CD8-positive, alpha-beta T cell (primary cell): ENCODE measurements at regions of chr10 and their contacts with region 1.

Region 1: GRCh38 chr10:89563861-89564478 is 28.6 kb upstream of the SLC16A12 start:
- DNase-seq: peak in 3 of 9 experiments; percentile 13 to 71 (median 60)
- ATAC-seq: peak; percentile 59
- H3K4me3 ChIP-seq: no peak overlapping the region
- H3K4me3 Mint-ChIP-seq: no peak overlapping the region
- H3K27ac ChIP-seq: no peak overlapping the region
- H3K27ac Mint-ChIP-seq: no peak overlapping the region
- H3K4me1 ChIP-seq: no peaks in the 10 kb centered on the region
- H3K4me1 Mint-ChIP-seq: no peaks in the 10 kb centered on the region
- H3K27me3 ChIP-seq: no peaks in the 10 kb centered on the region
- H3K27me3 Mint-ChIP-seq: peaks cover 6% of the 10 kb centered on the region
- CTCF ChIP-seq: peak; percentile 81

Region 2: DNA sequence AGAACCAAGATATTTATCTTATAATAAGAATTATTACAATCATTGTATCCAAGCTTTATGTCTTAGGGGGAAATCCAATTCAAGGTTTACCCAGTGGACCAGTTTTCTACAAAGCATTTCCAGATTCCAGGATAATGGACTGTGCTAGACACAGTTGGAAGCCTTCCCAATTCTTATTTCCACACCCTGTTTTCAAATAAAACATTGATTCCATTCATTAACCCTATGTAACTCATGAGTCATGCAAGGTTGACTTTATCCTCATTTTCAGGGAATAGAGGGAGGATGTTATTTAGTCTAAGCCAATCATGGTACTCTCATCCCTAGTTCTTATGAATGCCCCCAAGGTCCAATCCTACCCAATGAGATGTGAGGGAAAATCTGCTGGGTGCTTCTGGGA is 1126.6 kb before region 1 on chr10:
- CTCF ChIA-PET with region 1: no interaction called
- POLR2A ChIA-PET with region 1: no interaction called
- intact Hi-C with region 1: no loop called
- DNase-seq: no peak
- ATAC-seq: no peak
- H3K4me3 ChIP-seq: no peak overlapping the region
- H3K4me3 Mint-ChIP-seq: no peak overlapping the region
- H3K27ac ChIP-seq: no peak overlapping the region
- H3K27ac Mint-ChIP-seq: no peak overlapping the region
- H3K4me1 ChIP-seq: no peaks in the 10 kb centered on the region
- H3K4me1 Mint-ChIP-seq: no peaks in the 10 kb centered on the region
- H3K27me3 ChIP-seq: no peaks in the 10 kb centered on the region
- H3K27me3 Mint-ChIP-seq: no peaks in the 10 kb centered on the region
- CTCF ChIP-seq: no peak

Region 3: DNA sequence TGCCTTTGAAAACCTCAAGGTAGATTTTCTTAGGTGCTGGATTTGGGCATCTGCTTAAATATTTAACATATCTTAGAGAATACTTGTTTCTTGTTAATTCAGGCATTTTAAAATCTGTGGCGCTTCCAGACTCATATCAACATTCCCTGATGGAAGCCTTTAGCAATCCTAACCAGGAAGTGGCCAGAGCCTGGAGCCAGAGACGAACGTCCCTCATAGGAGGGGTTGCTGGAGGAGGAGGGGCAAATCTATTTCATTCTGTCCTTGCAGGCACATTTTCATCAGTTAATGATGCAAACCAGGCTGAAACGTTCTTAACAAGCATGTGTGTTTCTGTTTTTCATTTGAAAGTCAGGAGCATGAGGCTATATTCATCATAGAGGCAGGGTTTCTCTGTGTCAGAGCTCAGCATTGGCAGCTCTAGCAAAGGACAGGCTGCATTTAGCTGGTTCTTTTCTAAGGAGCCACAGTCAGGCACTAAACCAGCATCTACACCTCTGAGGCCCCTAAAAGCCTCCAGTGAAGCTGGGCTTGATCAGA is 280.0 kb before region 1 on chr10:
- CTCF ChIA-PET with region 1: no interaction called
- POLR2A ChIA-PET with region 1: no interaction called
- intact Hi-C with region 1: no loop called
- DNase-seq: no peak
- ATAC-seq: no peak
- H3K4me3 ChIP-seq: no peak overlapping the region
- H3K4me3 Mint-ChIP-seq: no peak overlapping the region
- H3K27ac ChIP-seq: no peak overlapping the region
- H3K27ac Mint-ChIP-seq: no peak overlapping the region
- H3K4me1 ChIP-seq: no peaks in the 10 kb centered on the region
- H3K4me1 Mint-ChIP-seq: no peaks in the 10 kb centered on the region
- H3K27me3 ChIP-seq: no peaks in the 10 kb centered on the region
- H3K27me3 Mint-ChIP-seq: no peaks in the 10 kb centered on the region
- CTCF ChIP-seq: no peak

Region 4: DNA sequence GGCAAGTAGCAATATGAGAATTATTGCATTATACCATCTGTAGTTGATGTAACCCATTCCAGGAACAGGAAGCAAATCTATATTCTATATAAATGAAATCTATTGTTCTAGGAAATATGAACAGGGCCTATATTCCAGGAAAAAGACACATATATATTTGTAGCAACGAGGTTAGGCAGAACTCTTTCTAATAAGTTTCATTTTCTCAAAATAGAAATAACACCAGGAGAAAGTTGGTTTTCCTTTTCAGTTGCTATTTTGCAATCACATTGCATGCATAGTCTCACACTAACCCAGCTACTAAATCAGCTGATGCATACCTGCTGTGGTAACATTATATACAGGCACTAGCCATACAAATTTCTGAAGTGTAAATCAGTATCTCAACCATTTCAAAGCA is 268.4 kb before region 1 on chr10:
- CTCF ChIA-PET with region 1: interaction called, 4 read pairs
- POLR2A ChIA-PET with region 1: no interaction called
- intact Hi-C with region 1: loop called in 1 of 2 experiments (anchors 1 kb)
- DNase-seq: no peak
- ATAC-seq: no peak
- H3K4me3 ChIP-seq: no peak overlapping the region
- H3K4me3 Mint-ChIP-seq: no peak overlapping the region
- H3K27ac ChIP-seq: no peak overlapping the region
- H3K27ac Mint-ChIP-seq: no peak overlapping the region
- H3K4me1 ChIP-seq: peaks cover under 1% of the 10 kb centered on the region
- H3K4me1 Mint-ChIP-seq: peaks cover 2% of the 10 kb centered on the region
- H3K27me3 ChIP-seq: no peaks in the 10 kb centered on the region
- H3K27me3 Mint-ChIP-seq: peaks cover 2% of the 10 kb centered on the region
- CTCF ChIP-seq: no peak

Region 5: GRCh38 chr10:89369156-89370105 is 194.5 kb before region 1 on chr10:
- CTCF ChIA-PET with region 1: interaction called, 8 read pairs
- POLR2A ChIA-PET with region 1: no interaction called
- intact Hi-C with region 1: loop called in 1 of 2 experiments (anchors 5 kb)
- DNase-seq: peak in 3 of 9 experiments; percentile 9 to 53 (median 41)
- ATAC-seq: peak; percentile 46
- H3K4me3 ChIP-seq: no peak overlapping the region
- H3K4me3 Mint-ChIP-seq: no peak overlapping the region
- H3K27ac ChIP-seq: no peak overlapping the region
- H3K27ac Mint-ChIP-seq: no peak overlapping the region
- H3K4me1 ChIP-seq: no peaks in the 10 kb centered on the region
- H3K4me1 Mint-ChIP-seq: peaks cover 5% of the 10 kb centered on the region
- H3K27me3 ChIP-seq: no peaks in the 10 kb centered on the region
- H3K27me3 Mint-ChIP-seq: peaks cover 10% of the 10 kb centered on the region
- CTCF ChIP-seq: peak; percentile 57

Region 6: GRCh38 chr10:89426230-89426868 is 137.6 kb before region 1 on chr10:
- CTCF ChIA-PET with region 1: interaction called, 4 read pairs
- POLR2A ChIA-PET with region 1: no interaction called
- intact Hi-C with region 1: loop called (anchors 1 to 2 kb)
- DNase-seq: peak in 2 of 9 experiments; percentile 42 to 57
- ATAC-seq: peak; percentile 49
- H3K4me3 ChIP-seq: no peak overlapping the region
- H3K4me3 Mint-ChIP-seq: no peak overlapping the region
- H3K27ac ChIP-seq: no peak overlapping the region
- H3K27ac Mint-ChIP-seq: no peak overlapping the region
- H3K4me1 ChIP-seq: no peaks in the 10 kb centered on the region
- H3K4me1 Mint-ChIP-seq: peaks cover under 1% of the 10 kb centered on the region
- H3K27me3 ChIP-seq: no peaks in the 10 kb centered on the region
- H3K27me3 Mint-ChIP-seq: peaks cover 4% of the 10 kb centered on the region
- CTCF ChIP-seq: peak; percentile 51

Region 7: GRCh38 chr10:89553064-89553734 is 10.8 kb before region 1 on chr10:
- CTCF ChIA-PET with region 1: interaction called, 11 read pairs
- POLR2A ChIA-PET with region 1: no interaction called
- intact Hi-C with region 1: no loop called
- DNase-seq: no peak
- ATAC-seq: no peak
- H3K4me3 ChIP-seq: no peak overlapping the region
- H3K4me3 Mint-ChIP-seq: no peak overlapping the region
- H3K27ac ChIP-seq: no peak overlapping the region
- H3K27ac Mint-ChIP-seq: no peak overlapping the region
- H3K4me1 ChIP-seq: no peaks in the 10 kb centered on the region
- H3K4me1 Mint-ChIP-seq: no peaks in the 10 kb centered on the region
- H3K27me3 ChIP-seq: no peaks in the 10 kb centered on the region
- H3K27me3 Mint-ChIP-seq: peaks cover 12% of the 10 kb centered on the region
- CTCF ChIP-seq: no peak